HepG2 (cell line): ENCODE measurements at regions of chr7 and their contacts with region 1.

Region 1: DNA sequence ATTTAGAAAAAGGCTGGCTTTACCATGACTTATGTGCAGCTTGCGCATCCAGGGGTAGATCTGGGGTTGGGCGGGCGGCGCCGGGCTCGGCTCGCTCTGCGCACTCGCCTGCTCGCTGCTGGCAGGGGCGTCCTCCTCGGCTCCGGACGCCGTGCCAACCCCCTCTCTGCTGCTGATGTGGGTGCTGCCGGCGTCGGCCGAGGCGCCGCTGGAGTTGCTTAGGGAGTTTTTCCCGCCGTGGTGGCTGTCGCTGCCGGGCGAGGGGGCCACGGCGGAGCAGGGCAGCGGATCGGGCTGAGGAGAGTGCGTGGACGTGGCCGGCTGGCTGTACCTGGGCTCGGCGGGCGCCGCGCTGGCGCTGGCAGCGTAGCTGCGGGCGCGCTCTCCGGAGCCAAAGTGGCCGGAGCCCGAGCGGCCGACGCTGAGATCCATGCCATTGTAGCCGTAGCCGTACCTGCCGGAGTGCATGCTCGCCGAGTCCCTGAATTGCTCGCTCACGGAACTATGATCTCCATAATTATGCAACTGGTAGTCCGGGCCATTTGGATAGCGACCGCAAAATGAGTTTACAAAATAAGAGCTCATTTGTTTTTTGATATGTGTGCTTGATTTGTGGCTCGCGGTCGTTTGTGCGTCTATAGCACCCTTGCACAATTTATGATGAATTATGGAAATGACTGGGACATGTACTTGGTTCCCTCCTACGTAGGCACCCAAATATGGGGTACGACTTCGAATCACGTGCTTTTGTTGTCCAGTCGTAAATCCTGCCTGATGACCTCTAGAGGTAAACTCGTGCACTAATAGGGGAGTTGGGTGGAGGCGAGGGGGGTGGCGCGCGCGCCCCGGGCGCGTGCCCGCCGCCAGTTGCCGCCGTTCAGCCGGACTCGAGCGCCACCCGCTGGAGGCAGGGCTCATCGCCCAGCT is at the start of gene HOXA5:
- DNase-seq: peak; percentile 90
- ATAC-seq: peak; percentile 74
- H3K4me3 ChIP-seq: peak within 1 kb of the TSS; percentile 70 to 79 (median 76)
- H3K27ac ChIP-seq: peak within 1 kb of the TSS; percentile 60
- H3K4me1 ChIP-seq: peaks cover 12% of the 10 kb centered on the region
- H3K27me3 ChIP-seq: no peaks in the 10 kb centered on the region
- CTCF ChIP-seq: peak; percentile 77
- EP300 ChIP-seq: no peak
- POLR2A ChIP-seq: peak; percentile 27 to 28; a peak in 1 of 4 replicates
- RAD21 ChIP-seq: peak; percentile 88
- total RNA-seq, gene HOXA5: 3.2 and 3.9 TPM in 2 replicates

Region 2: DNA sequence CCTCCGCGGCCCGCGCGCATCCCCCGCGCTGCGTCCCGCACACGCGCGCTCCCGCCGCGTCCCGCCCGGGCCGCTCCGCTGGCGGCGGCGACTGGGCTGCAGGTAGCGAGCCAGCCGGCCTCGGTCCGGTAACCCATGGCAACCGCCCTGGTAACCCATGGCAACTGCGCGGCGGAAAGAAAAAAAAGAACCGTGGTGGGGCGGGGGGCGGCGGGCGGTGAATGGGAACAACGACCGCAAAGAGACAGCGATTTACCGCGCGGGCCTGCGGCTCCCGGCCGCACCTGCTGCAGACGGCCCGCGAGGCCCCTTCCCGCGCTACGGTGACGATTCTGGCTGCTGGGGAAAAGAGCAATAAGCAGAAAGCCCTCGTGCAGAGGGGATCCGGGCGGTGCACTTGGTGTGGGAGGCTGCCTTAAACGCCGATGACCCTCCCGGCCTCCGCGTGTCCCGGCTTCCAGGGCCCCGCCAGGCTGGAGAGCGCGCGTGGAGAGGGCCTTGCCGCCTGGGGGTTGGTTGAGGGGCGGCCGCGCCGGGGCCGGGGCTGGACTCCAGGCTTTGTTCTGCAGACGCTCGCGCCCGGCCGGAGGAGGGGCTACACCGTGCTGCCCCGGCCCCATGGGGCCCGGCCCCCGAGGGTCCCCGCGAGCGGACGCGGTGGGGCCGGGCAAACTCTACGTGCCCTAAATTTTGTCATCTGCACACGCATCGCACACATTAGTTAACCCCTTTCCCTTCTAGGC is 766.9 kb before region 1 on chr7:
- CTCF ChIA-PET with region 1: no interaction called
- POLR2A ChIA-PET with region 1: no interaction called
- in situ Hi-C with region 1: no loop called
- intact Hi-C with region 1: loop called (anchors 5 kb)
- DNase-seq: peak; percentile 23
- ATAC-seq: peak; percentile 93
- H3K4me3 ChIP-seq: peak overlapping the region; percentile 57 to 74 (median 72)
- H3K27ac ChIP-seq: peak overlapping the region; percentile 31
- H3K4me1 ChIP-seq: peaks cover 5% of the 10 kb centered on the region; the same call in 1 of the 2 replicates
- H3K27me3 ChIP-seq: no peaks in the 10 kb centered on the region
- CTCF ChIP-seq: no peak
- EP300 ChIP-seq: no peak
- POLR2A ChIP-seq: 0 out of 4 replicates have a peak, but pooled peaks of 1 of the 2 experiments have one; percentile 20
- RAD21 ChIP-seq: no peak

Region 3: GRCh38 chr7:26735976-26736600 is 407.2 kb before region 1 on chr7:
- CTCF ChIA-PET with region 1: no interaction called
- POLR2A ChIA-PET with region 1: no interaction called
- in situ Hi-C with region 1: no loop called
- intact Hi-C with region 1: no loop called
- DNase-seq: no peak
- ATAC-seq: no peak
- H3K4me3 ChIP-seq: no peak overlapping the region
- H3K27ac ChIP-seq: no peak overlapping the region
- H3K4me1 ChIP-seq: no peaks in the 10 kb centered on the region
- H3K27me3 ChIP-seq: no peaks in the 10 kb centered on the region
- CTCF ChIP-seq: no peak
- EP300 ChIP-seq: no peak
- POLR2A ChIP-seq: no peak
- RAD21 ChIP-seq: no peak

Region 4: DNA sequence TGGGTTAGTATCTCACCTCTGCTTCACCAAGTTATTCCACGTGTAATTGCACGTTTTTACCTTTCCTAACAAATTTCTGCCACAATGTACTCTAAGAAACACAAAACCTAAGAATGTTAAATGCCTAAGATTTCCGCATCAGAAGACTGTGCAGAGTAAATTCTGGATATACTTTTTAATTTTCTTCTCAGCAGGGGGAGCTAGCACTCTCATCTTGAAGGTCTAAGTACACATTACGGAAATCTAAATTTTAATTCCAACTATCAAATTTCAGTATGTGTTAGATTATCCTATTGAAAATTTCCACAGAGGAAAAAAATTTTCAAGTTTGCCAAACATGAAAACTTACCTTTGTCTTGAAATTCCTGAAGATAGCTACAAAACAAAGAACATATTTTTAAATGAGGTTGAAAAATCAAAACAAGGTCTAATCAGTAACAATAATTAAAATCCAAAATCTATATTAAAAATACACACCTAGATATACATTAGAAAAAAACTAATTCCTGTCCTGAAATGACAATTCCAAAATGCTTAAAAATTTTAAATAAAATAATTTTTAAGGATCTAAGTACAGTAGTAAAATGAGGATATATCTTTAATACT is 289.4 kb before region 1 on chr7:
- CTCF ChIA-PET with region 1: interaction called, 14 read pairs
- POLR2A ChIA-PET with region 1: no interaction called
- in situ Hi-C with region 1: no loop called
- intact Hi-C with region 1: no loop called
- DNase-seq: peak; percentile 14
- ATAC-seq: no peak
- H3K4me3 ChIP-seq: no peak overlapping the region
- H3K27ac ChIP-seq: no peak overlapping the region
- H3K4me1 ChIP-seq: peaks cover 10% of the 10 kb centered on the region
- H3K27me3 ChIP-seq: no peaks in the 10 kb centered on the region
- CTCF ChIP-seq: peak; percentile 52
- EP300 ChIP-seq: no peak
- POLR2A ChIP-seq: no peak
- RAD21 ChIP-seq: no peak

Region 5: GRCh38 chr7:26864309-26865093 is 278.8 kb before region 1 on chr7 and contains the start of gene SKAP2:
- CTCF ChIA-PET with region 1: no interaction called
- POLR2A ChIA-PET with region 1: interaction called, 12 read pairs
- in situ Hi-C with region 1: no loop called
- intact Hi-C with region 1: no loop called
- DNase-seq: peak; percentile 96
- ATAC-seq: peak; percentile 98
- H3K4me3 ChIP-seq: peak within 1 kb of the TSS; percentile 87 to 95 (median 93)
- H3K27ac ChIP-seq: peak within 1 kb of the TSS; percentile 83
- H3K4me1 ChIP-seq: peaks cover 21% of the 10 kb centered on the region
- H3K27me3 ChIP-seq: no peaks in the 10 kb centered on the region; a peak in 1 of 5 replicates
- CTCF ChIP-seq: no peak; the same call in 1 of the 2 replicates
- EP300 ChIP-seq: peak in 1 of 2 experiments; percentile 38; a peak in 1 of 4 replicates
- POLR2A ChIP-seq: peak; percentile 94 to 97
- RAD21 ChIP-seq: no peak
- total RNA-seq, gene SKAP2: 12.9 and 18.8 TPM in 2 replicates

Region 6: DNA sequence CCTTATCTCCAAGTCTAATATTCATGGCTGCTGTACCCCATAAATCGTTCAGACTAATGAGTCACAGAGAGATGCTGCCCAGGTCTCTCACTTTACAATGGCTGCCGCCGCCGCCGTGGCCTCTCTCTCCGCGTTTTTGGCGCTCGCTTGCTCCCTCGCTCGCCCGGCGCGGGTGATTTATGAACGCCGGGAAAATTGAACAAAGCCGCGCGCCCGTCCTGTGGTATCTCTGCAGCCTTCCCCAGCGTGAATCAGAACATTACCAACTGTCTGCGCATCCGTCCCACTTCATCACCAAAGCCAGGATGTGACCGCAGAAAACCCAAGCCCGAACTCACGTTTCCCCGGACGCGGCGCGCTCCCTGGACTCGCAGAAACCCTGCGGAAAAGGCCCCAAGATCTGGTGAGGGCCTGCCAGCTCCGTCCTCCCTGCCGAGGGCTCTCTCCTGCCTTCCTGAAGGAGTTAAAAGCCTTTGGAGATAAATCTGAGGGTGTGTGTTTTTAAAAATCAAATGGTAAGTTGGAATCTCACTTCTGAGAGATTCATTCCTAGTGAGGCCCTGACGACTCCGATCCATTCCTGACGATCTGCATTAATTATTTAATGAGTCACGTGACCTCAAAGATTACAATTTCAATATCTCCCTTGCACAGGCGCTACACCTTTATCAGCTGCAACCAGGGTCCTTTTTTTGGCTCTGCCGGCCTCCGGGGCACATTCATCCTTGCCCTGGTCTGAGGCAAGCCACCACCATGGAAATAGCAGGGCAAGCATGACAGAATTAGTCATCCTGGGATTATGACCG is 19.0 kb before region 1 on chr7:
- CTCF ChIA-PET with region 1: no interaction called
- POLR2A ChIA-PET with region 1: interaction called, 13 read pairs
- in situ Hi-C with region 1: no loop called
- intact Hi-C with region 1: no loop called
- DNase-seq: no peak
- ATAC-seq: no peak
- H3K4me3 ChIP-seq: no peak overlapping the region; a peak in 1 of 6 replicates
- H3K27ac ChIP-seq: no peak overlapping the region
- H3K4me1 ChIP-seq: peaks cover 81% of the 10 kb centered on the region
- H3K27me3 ChIP-seq: no peaks in the 10 kb centered on the region; a peak in 1 of 5 replicates
- CTCF ChIP-seq: no peak
- EP300 ChIP-seq: no peak
- POLR2A ChIP-seq: no peak
- RAD21 ChIP-seq: no peak

Region 7: DNA sequence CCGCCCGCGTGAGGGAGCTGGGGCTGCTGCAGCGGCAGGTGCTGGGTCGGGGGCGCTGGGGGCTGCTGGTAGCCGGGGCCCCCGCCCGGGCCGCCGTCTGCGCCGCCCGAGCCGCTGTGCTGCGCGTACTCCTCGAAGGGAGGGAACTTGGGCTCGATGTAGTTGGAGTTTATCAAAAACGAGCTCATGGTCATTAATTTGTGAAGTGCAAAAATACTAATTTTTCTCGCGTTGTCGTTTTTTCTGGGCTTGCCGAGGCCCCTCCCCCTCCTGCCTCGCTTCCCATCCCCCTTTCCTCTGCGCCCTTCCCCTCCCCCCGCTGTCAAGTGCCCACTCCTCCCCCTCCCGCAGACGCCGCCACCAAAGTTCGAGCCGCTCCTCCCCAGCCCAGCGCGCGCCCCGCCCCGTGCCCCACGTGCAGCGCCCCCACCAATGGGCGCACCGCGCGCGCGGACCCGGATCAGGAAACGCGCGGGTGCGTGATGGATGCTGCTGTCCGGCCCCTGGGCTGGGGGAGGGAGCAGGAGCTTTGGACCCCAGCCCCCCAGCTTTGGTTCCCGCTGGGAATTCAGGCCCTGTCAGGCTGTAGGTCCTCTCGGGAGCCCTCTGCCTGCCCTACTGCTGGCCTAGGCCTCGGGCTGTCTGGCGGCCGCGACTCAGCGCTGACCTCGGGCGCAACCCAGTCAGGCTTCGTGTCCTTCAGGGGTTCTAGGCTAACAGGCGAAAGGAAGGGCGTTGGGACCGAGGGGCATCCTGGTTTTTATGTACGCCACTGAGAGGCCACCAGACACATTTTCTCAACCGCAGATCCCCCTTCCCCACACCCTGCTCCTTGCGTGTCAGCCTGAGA is 12.5 kb before region 1 on chr7 and contains the start of gene HOXA4:
- CTCF ChIA-PET with region 1: no interaction called
- POLR2A ChIA-PET with region 1: interaction called, 10 read pairs
- in situ Hi-C with region 1: no loop called
- intact Hi-C with region 1: no loop called
- DNase-seq: peak; percentile 77
- ATAC-seq: peak; percentile 89
- H3K4me3 ChIP-seq: peak within 1 kb of the TSS; percentile 62 to 88 (median 69)
- H3K27ac ChIP-seq: peak within 1 kb of the TSS; percentile 78
- H3K4me1 ChIP-seq: peaks cover 90% of the 10 kb centered on the region
- H3K27me3 ChIP-seq: no peaks in the 10 kb centered on the region
- CTCF ChIP-seq: no peak
- EP300 ChIP-seq: no peak; a peak in 1 of 4 replicates
- POLR2A ChIP-seq: peak; percentile 76 to 77
- RAD21 ChIP-seq: peak; percentile 50; the same call in 1 of the 2 replicates
- total RNA-seq, gene HOXA4: 1.8 and 2.4 TPM in 2 replicates